ENCODE measurements at regions of chr13 and their contacts with region 1.

Region 1: DNA sequence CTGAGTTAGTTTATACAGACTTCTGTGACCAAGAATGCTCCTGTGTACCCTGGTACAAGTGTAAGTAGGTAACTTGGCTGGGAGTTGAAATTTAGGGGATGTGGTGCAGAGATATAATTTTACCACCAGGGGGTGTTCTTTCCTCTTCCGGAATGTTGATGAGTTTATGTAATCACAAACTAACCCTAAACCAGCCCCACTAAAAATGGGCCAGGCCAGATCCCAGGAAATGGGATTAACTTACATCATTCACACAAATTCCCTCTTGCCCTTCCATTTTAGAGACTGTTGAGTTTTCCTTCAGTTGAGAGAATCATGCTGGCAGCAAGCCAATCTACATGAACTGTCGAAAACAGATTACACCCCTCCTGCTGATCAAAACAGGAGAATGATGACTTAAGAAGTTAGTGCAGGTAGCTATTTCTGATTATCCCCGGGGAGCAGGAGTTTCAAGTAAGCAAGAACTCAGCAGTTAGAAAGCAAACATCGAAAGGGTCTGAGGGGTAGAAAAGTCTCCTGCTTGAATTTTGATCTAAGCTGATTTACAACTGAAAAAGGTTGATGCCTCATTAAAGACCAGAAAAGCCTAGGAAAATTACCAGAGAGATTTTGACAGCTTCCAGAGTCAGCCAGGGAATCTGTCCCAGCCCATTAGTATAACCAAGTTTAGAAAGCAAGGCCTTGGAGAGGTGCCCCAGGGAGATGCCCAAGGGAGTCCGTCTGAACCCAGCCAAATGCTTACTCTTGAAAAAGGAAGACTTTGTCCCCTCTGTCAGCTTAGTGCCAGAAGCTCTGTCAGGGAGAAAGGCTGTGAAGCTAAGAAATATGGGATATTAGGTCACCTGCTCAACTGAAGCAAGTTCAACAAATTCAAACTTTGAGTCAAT is 32.3 kb upstream of the MED4 start:
- DNase-seq: peak; percentile 50 to 80 (median 79)
- H3K4me3 ChIP-seq: no peak overlapping the region
- H3K4me3 Mint-ChIP-seq: peak overlapping the region; percentile 30 to 75 (median 60)
- H3K27ac ChIP-seq: peak overlapping the region; percentile 42
- H3K27ac Mint-ChIP-seq: peak overlapping the region; percentile 87 to 96 (median 90)
- H3K4me1 ChIP-seq: peaks cover 13% of the 10 kb centered on the region
- H3K4me1 Mint-ChIP-seq: peaks cover 19 to 31% (median 22%) of the 10 kb centered on the region in 4 donors
- H3K27me3 ChIP-seq: no peaks in the 10 kb centered on the region
- H3K27me3 Mint-ChIP-seq: no peaks in the 10 kb centered on the region

Region 2: GRCh38 chr13:48094781-48095502 is 32.2 kb before region 1 on chr13 and contains the start of gene MED4:
- CTCF ChIA-PET with region 1: interaction called, 6 read pairs
- POLR2A ChIA-PET with region 1: no interaction called
- intact Hi-C with region 1: loop called (anchors 1 kb)
- DNase-seq: peak; percentile 95 to 98 (median 97)
- H3K4me3 ChIP-seq: peak within 1 kb of the TSS; percentile 73 to 76
- H3K4me3 Mint-ChIP-seq: peak within 1 kb of the TSS; percentile 93 to 98 (median 96)
- H3K27ac ChIP-seq: peak within 1 kb of the TSS; percentile 96
- H3K27ac Mint-ChIP-seq: peak within 1 kb of the TSS; percentile 92 to 99 (median 98)
- H3K4me1 ChIP-seq: peaks cover 37% of the 10 kb centered on the region
- H3K4me1 Mint-ChIP-seq: peaks cover 24 to 54% (median 35%) of the 10 kb centered on the region in 4 donors
- H3K27me3 ChIP-seq: no peaks in the 10 kb centered on the region
- H3K27me3 Mint-ChIP-seq: peaks cover 0 to 2% of the 10 kb centered on the region in 2 donors
- total RNA-seq, gene MED4: 50.6 to 53.5 TPM

Region 3: DNA sequence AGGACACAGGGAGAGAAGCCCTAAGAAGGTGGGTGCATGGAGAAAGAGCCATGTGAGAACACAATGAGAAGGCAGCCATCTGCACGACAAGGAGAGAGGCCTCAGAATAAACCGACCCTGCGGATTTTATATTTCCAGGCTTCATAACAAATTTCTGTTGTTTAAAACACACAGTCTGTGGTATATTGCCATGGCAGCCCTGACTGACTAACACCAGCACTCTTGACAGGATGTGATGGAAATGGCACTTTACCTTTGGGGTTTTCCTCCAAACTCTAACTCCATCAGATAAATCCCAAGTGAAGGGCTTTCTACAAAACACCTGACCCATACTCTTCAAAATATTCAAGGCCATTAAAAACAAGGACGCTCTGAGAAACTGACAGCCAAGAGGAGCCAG is 19.1 kb before region 1 on chr13:
- CTCF ChIA-PET with region 1: no interaction called
- POLR2A ChIA-PET with region 1: no interaction called
- intact Hi-C with region 1: no loop called
- DNase-seq: no peak
- H3K4me3 ChIP-seq: no peak overlapping the region
- H3K4me3 Mint-ChIP-seq: no peak overlapping the region
- H3K27ac ChIP-seq: no peak overlapping the region
- H3K27ac Mint-ChIP-seq: no peak overlapping the region
- H3K4me1 ChIP-seq: no peaks in the 10 kb centered on the region
- H3K4me1 Mint-ChIP-seq: no peaks in the 10 kb centered on the region
- H3K27me3 ChIP-seq: no peaks in the 10 kb centered on the region
- H3K27me3 Mint-ChIP-seq: peaks cover under 1 to 4% of the 10 kb centered on the region in 2 donors

Region 4: GRCh38 chr13:48155848-48156247 is 28.7 kb after region 1 on chr13:
- CTCF ChIA-PET with region 1: interaction called, 32 read pairs
- POLR2A ChIA-PET with region 1: interaction called, 29 read pairs
- intact Hi-C with region 1: loop called (anchors 1 kb)
- DNase-seq: peak; percentile 69 to 83 (median 81)
- H3K4me3 ChIP-seq: peak overlapping the region in 1 of 2 donors; percentile 46
- H3K4me3 Mint-ChIP-seq: peak overlapping the region; percentile 40 to 84 (median 68)
- H3K27ac ChIP-seq: peak overlapping the region; percentile 78
- H3K27ac Mint-ChIP-seq: peak overlapping the region; percentile 85 to 98 (median 95)
- H3K4me1 ChIP-seq: peaks cover 89% of the 10 kb centered on the region
- H3K4me1 Mint-ChIP-seq: peaks cover 50 to 91% (median 75%) of the 10 kb centered on the region in 4 donors
- H3K27me3 ChIP-seq: no peaks in the 10 kb centered on the region
- H3K27me3 Mint-ChIP-seq: no peaks in the 10 kb centered on the region

Region 5: GRCh38 chr13:48222358-48223301 is 95.4 kb after region 1 on chr13:
- CTCF ChIA-PET with region 1: interaction called, 9 read pairs
- POLR2A ChIA-PET with region 1: interaction called, 11 read pairs
- intact Hi-C with region 1: no loop called
- DNase-seq: peak in 1 of 5 donors; percentile 20
- H3K4me3 ChIP-seq: peak overlapping the region in 1 of 2 donors; percentile 13
- H3K4me3 Mint-ChIP-seq: peak overlapping the region; percentile 57 to 88 (median 81)
- H3K27ac ChIP-seq: peak overlapping the region; percentile 71
- H3K27ac Mint-ChIP-seq: peak overlapping the region; percentile 58 to 98 (median 88)
- H3K4me1 ChIP-seq: peaks cover 62% of the 10 kb centered on the region
- H3K4me1 Mint-ChIP-seq: peaks cover 44 to 63% (median 54%) of the 10 kb centered on the region in 4 donors
- H3K27me3 ChIP-seq: no peaks in the 10 kb centered on the region
- H3K27me3 Mint-ChIP-seq: no peaks in the 10 kb centered on the region

Region 6: GRCh38 chr13:48251611-48252081 is 124.5 kb after region 1 on chr13:
- CTCF ChIA-PET with region 1: interaction called, 8 read pairs
- POLR2A ChIA-PET with region 1: interaction called, 7 read pairs
- intact Hi-C with region 1: loop called (anchors 1 kb)
- DNase-seq: no peak
- H3K4me3 ChIP-seq: no peak overlapping the region
- H3K4me3 Mint-ChIP-seq: peak overlapping the region in 6 of 8 donors; percentile 8 to 57 (median 26)
- H3K27ac ChIP-seq: no peak overlapping the region
- H3K27ac Mint-ChIP-seq: peak overlapping the region in 6 of 7 donors; percentile 4 to 45 (median 29)
- H3K4me1 ChIP-seq: peaks cover 65% of the 10 kb centered on the region
- H3K4me1 Mint-ChIP-seq: peaks cover 43 to 80% (median 62%) of the 10 kb centered on the region in 4 donors
- H3K27me3 ChIP-seq: no peaks in the 10 kb centered on the region
- H3K27me3 Mint-ChIP-seq: no peaks in the 10 kb centered on the region

Region 7: GRCh38 chr13:48291730-48292129 is 164.5 kb after region 1 on chr13:
- CTCF ChIA-PET with region 1: no interaction called
- POLR2A ChIA-PET with region 1: no interaction called
- intact Hi-C with region 1: no loop called
- DNase-seq: no peak
- H3K4me3 ChIP-seq: no peak overlapping the region
- H3K4me3 Mint-ChIP-seq: no peak overlapping the region
- H3K27ac ChIP-seq: no peak overlapping the region
- H3K27ac Mint-ChIP-seq: no peak overlapping the region
- H3K4me1 ChIP-seq: no peaks in the 10 kb centered on the region
- H3K4me1 Mint-ChIP-seq: no peaks in the 10 kb centered on the region
- H3K27me3 ChIP-seq: peaks cover 7% of the 10 kb centered on the region
- H3K27me3 Mint-ChIP-seq: peaks cover 1 to 6% of the 10 kb centered on the region in 2 donors

Region 8: DNA sequence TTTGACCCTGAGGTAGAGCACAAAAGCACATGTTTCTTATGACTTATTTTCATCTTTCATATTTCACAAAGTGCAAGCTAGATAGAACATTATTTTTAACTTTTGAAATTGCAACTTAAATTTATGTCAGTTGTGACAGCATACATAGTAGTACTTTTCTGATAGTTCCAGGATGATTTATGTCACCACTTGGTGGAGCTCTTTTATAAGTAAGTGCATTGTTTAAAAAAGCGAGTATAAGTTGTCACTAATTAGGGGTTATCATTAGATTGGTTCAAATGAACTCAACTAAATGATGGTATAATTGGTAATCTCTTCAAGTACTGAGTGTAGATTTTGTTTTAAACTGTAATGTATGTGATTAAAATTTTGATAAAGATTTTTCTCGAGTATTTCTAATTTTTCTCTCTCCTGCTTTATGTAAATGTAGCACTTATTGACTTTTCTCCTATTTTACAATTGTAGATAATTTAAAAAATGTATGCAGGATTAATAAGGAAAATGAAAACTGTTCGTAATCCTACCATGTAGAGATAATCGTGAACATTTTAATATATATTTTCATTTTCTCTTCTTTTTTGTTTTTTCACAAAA is 207.4 kb after region 1 on chr13:
- CTCF ChIA-PET with region 1: interaction called, 20 read pairs
- POLR2A ChIA-PET with region 1: interaction called, 8 read pairs
- intact Hi-C with region 1: loop called (anchors 1 kb)
- DNase-seq: peak in 4 of 5 donors; percentile 50 to 55 (median 52)
- H3K4me3 ChIP-seq: no peak overlapping the region
- H3K4me3 Mint-ChIP-seq: no peak overlapping the region
- H3K27ac ChIP-seq: no peak overlapping the region
- H3K27ac Mint-ChIP-seq: peak overlapping the region in 1 of 7 donors; percentile 13
- H3K4me1 ChIP-seq: peaks cover 8% of the 10 kb centered on the region
- H3K4me1 Mint-ChIP-seq: peaks cover 6 to 16% (median 10%) of the 10 kb centered on the region in 4 donors
- H3K27me3 ChIP-seq: no peaks in the 10 kb centered on the region
- H3K27me3 Mint-ChIP-seq: no peaks in the 10 kb centered on the region

Region 9: GRCh38 chr13:48769107-48769704 is 642.0 kb after region 1 on chr13:
- CTCF ChIA-PET with region 1: interaction called, 3 read pairs
- POLR2A ChIA-PET with region 1: no interaction called
- intact Hi-C with region 1: loop called (anchors 1 kb)
- DNase-seq: peak; percentile 83 to 85 (median 85)
- H3K4me3 ChIP-seq: no peak overlapping the region
- H3K4me3 Mint-ChIP-seq: peak overlapping the region in 1 of 8 donors; percentile 11
- H3K27ac ChIP-seq: no peak overlapping the region
- H3K27ac Mint-ChIP-seq: peak overlapping the region in 2 of 7 donors; percentile 5 to 58
- H3K4me1 ChIP-seq: no peaks in the 10 kb centered on the region
- H3K4me1 Mint-ChIP-seq: peaks cover 3 to 15% (median 5%) of the 10 kb centered on the region in 4 donors
- H3K27me3 ChIP-seq: no peaks in the 10 kb centered on the region
- H3K27me3 Mint-ChIP-seq: peaks cover 6 to 8% of the 10 kb centered on the region in 2 donors

Region 10: DNA sequence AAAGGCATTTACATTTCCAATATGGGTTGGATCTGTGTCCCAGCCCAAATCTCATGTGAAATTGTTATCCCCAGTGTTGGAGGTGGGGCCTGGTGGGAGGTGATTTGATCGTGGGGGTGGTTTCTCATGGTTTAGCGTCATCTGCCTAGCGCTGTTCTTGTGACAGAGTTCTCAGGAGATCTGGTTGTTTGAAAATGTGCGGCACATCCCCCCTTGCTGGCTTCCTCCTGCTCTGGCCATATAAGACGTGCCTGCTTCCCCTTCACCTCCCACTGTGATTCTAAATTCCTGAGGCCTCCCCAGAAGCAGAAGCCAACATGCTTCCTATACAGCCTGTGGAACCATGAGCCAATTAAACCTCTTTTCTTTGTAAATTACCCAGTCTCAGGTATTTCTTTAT is 722.3 kb after region 1 on chr13:
- CTCF ChIA-PET with region 1: no interaction called
- POLR2A ChIA-PET with region 1: no interaction called
- intact Hi-C with region 1: no loop called
- DNase-seq: no peak
- H3K4me3 ChIP-seq: no peak overlapping the region
- H3K4me3 Mint-ChIP-seq: no peak overlapping the region
- H3K27ac ChIP-seq: no peak overlapping the region
- H3K27ac Mint-ChIP-seq: no peak overlapping the region
- H3K4me1 ChIP-seq: no peaks in the 10 kb centered on the region
- H3K4me1 Mint-ChIP-seq: peaks cover 2 to 23% (median 17%) of the 10 kb centered on the region in 4 donors
- H3K27me3 ChIP-seq: no peaks in the 10 kb centered on the region
- H3K27me3 Mint-ChIP-seq: peaks cover 0 to 2% of the 10 kb centered on the region in 2 donors